ENCODE measurements at regions of chr1 and their contacts with region 1.

Region 1: GRCh38 chr1:87953732-87954344 is 625.2 kb downstream of the LMO4 start:
- DNase-seq: peak in 1 of 2 experiments; percentile 66
- H3K4me3 ChIP-seq: no peak overlapping the region
- H3K27ac ChIP-seq: no peak overlapping the region
- H3K4me1 ChIP-seq: peaks cover 0 to 4% (median 2%) of the 10 kb centered on the region in 4 experiments; a peak in 4 of 7 replicates
- H3K27me3 ChIP-seq: no peaks in the 10 kb centered on the region
- CTCF ChIP-seq: peak; percentile 43 to 75 (median 71)
- EP300 ChIP-seq: no peak
- POLR2A ChIP-seq: no peak
- RAD21 ChIP-seq: peak; percentile 79 to 82

Region 2: GRCh38 chr1:87673748-87674147 is 280.1 kb before region 1 on chr1:
- CTCF ChIA-PET with region 1: interaction called, 22 read pairs
- POLR2A ChIA-PET with region 1: no interaction called
- DNase-seq: no peak
- H3K4me3 ChIP-seq: no peak overlapping the region
- H3K27ac ChIP-seq: no peak overlapping the region
- H3K4me1 ChIP-seq: no peaks in the 10 kb centered on the region
- H3K27me3 ChIP-seq: peaks cover 0 to 2% (median 0%) of the 10 kb centered on the region in 4 experiments; a peak in 1 of 7 replicates
- CTCF ChIP-seq: peak in 1 of 3 experiments; percentile 16; a peak in 2 of 4 replicates
- EP300 ChIP-seq: no peak
- POLR2A ChIP-seq: no peak
- RAD21 ChIP-seq: peak; percentile 39 to 40

Region 3: GRCh38 chr1:87778896-87779295 is 174.9 kb before region 1 on chr1:
- CTCF ChIA-PET with region 1: no interaction called
- POLR2A ChIA-PET with region 1: no interaction called
- DNase-seq: no peak
- H3K4me3 ChIP-seq: no peak overlapping the region
- H3K27ac ChIP-seq: no peak overlapping the region
- H3K4me1 ChIP-seq: no peaks in the 10 kb centered on the region
- H3K27me3 ChIP-seq: no peaks in the 10 kb centered on the region
- CTCF ChIP-seq: no peak
- EP300 ChIP-seq: no peak
- POLR2A ChIP-seq: no peak
- RAD21 ChIP-seq: no peak

Region 4: GRCh38 chr1:87929893-87930292 is 23.9 kb before region 1 on chr1:
- CTCF ChIA-PET with region 1: interaction called, 12 read pairs
- POLR2A ChIA-PET with region 1: no interaction called
- DNase-seq: no peak
- H3K4me3 ChIP-seq: no peak overlapping the region
- H3K27ac ChIP-seq: no peak overlapping the region
- H3K4me1 ChIP-seq: no peaks in the 10 kb centered on the region
- H3K27me3 ChIP-seq: no peaks in the 10 kb centered on the region
- CTCF ChIP-seq: no peak
- EP300 ChIP-seq: no peak
- POLR2A ChIP-seq: no peak
- RAD21 ChIP-seq: no peak

Region 5: DNA sequence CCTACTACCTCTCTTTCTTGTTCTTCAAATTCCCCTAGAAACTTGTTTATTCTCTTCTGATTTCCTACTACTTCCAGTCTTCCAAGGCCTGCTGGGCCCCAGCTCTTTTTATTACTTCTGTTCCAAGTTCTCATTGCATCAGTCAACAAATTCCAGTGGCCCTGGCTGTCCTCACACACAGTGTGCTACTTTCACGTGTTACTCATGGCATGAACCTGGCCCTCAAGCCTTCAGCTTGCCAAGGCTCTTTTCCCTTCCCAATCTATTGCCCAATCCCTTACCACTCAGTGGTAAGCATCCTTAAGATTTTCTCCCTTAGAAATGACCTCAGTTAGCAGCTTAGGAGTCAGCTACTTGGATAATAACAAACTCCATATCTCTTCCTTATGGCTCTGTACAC is 11.7 kb before region 1 on chr1:
- CTCF ChIA-PET with region 1: interaction called, 12 read pairs
- POLR2A ChIA-PET with region 1: no interaction called
- DNase-seq: no peak
- H3K4me3 ChIP-seq: no peak overlapping the region
- H3K27ac ChIP-seq: no peak overlapping the region
- H3K4me1 ChIP-seq: peaks cover 0 to 6% (median 4%) of the 10 kb centered on the region in 4 experiments; a peak in 4 of 7 replicates
- H3K27me3 ChIP-seq: no peaks in the 10 kb centered on the region
- CTCF ChIP-seq: no peak
- EP300 ChIP-seq: no peak
- POLR2A ChIP-seq: no peak
- RAD21 ChIP-seq: no peak

Region 6: GRCh38 chr1:87968197-87968955 is 14.5 kb after region 1 on chr1:
- CTCF ChIA-PET with region 1: interaction called, 25 read pairs
- POLR2A ChIA-PET with region 1: no interaction called
- DNase-seq: no peak
- H3K4me3 ChIP-seq: 0 out of 8 replicates have a peak overlapping the region, but pooled peaks of 1 of the 4 experiments have one; percentile 3
- H3K27ac ChIP-seq: no peak overlapping the region
- H3K4me1 ChIP-seq: peaks cover 4 to 9% (median 7%) of the 10 kb centered on the region in 4 experiments; a peak in 6 of 7 replicates
- H3K27me3 ChIP-seq: no peaks in the 10 kb centered on the region
- CTCF ChIP-seq: no peak
- EP300 ChIP-seq: no peak
- POLR2A ChIP-seq: no peak
- RAD21 ChIP-seq: no peak

Measured in H1 (cell line).